ENCODE measurements at regions of chr5 and their contacts with region 1.

Region 1: DNA sequence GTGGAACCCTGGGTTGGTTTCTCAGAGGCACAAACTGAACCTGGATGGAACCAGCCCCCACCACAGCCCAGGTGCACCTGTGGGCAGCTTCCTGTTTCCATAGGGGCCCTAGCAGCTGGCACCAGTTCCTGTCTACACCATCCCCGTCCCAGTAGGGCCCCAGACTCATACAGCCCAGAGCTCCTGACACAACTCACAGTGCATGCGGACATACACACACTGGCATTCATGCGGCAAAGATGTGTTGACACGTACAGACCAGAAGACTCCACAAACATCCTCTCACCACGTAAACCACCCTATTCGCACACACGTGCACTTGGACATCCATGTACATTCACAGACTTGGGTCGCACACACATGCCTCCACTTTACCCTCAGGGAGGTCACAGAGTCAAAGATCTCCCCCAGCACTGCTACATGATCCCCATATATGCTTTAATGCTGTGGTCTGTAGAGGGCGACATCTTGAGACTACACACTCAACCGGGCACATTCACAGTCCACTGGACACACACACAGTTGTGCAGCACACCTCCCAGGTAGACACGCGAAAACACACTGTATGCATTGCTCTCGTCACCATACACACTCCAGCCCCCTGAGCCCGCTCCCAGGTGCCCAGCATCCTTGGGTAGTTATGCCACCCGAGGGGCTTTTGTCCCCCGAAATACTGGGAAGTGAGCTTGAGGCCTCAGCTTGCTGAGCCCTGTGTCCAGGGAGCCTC is 22.4 kb downstream of the CXXC5 start:
- DNase-seq: no peak
- H3K4me3 ChIP-seq: no peak overlapping the region
- H3K27ac ChIP-seq: no peak overlapping the region
- H3K4me1 ChIP-seq: peaks cover 9 to 55% (median 43%) of the 10 kb centered on the region in 4 experiments
- H3K27me3 ChIP-seq: no peaks in the 10 kb centered on the region
- CTCF ChIP-seq: peak in 1 of 3 experiments; percentile 50; a peak in 1 of 4 replicates
- EP300 ChIP-seq: no peak
- POLR2A ChIP-seq: no peak
- RAD21 ChIP-seq: no peak

Region 2: GRCh38 chr5:139684881-139685749 is 14.6 kb after region 1 on chr5:
- CTCF ChIA-PET with region 1: interaction called, 25 read pairs
- POLR2A ChIA-PET with region 1: interaction called, 12 read pairs
- DNase-seq: no peak
- H3K4me3 ChIP-seq: no peak overlapping the region
- H3K27ac ChIP-seq: no peak overlapping the region
- H3K4me1 ChIP-seq: peaks cover 37 to 67% (median 57%) of the 10 kb centered on the region in 4 experiments
- H3K27me3 ChIP-seq: no peaks in the 10 kb centered on the region
- CTCF ChIP-seq: peak in 1 of 3 experiments; percentile 27; a peak in 2 of 4 replicates
- EP300 ChIP-seq: no peak
- POLR2A ChIP-seq: no peak
- RAD21 ChIP-seq: peak in 1 of 2 experiments; percentile 25; a peak in 2 of 4 replicates

Region 3: GRCh38 chr5:139690064-139690802 is 19.7 kb after region 1 on chr5:
- CTCF ChIA-PET with region 1: interaction called, 25 read pairs
- POLR2A ChIA-PET with region 1: interaction called, 12 read pairs
- DNase-seq: no peak
- H3K4me3 ChIP-seq: no peak overlapping the region
- H3K27ac ChIP-seq: no peak overlapping the region
- H3K4me1 ChIP-seq: peaks cover 27 to 51% (median 43%) of the 10 kb centered on the region in 4 experiments
- H3K27me3 ChIP-seq: peaks cover 0 to 5% (median 0%) of the 10 kb centered on the region in 4 experiments; a peak in 3 of 7 replicates
- CTCF ChIP-seq: no peak
- EP300 ChIP-seq: no peak
- POLR2A ChIP-seq: no peak
- RAD21 ChIP-seq: 0 out of 4 replicates have a peak, but pooled peaks of 1 of the 2 experiments have one; percentile 19